SK-N-SH (cell line): ENCODE measurements at regions of chr3 and their contacts with region 1.

Region 1: GRCh38 chr3:11651900-11652299 is 8.2 kb upstream of the VGLL4 start:
- DNase-seq: peak; percentile 43
- H3K4me3 ChIP-seq: no peak overlapping the region
- H3K27ac ChIP-seq: no peak overlapping the region
- H3K4me1 ChIP-seq: peaks cover 0 to 2% of the 10 kb centered on the region in 2 experiments; a peak in 2 of 4 replicates
- H3K27me3 ChIP-seq: no peaks in the 10 kb centered on the region
- CTCF ChIP-seq: peak; percentile 64
- EP300 ChIP-seq: no peak
- RAD21 ChIP-seq: peak; percentile 72

Region 2: GRCh38 chr3:11385891-11386290 is 266.0 kb before region 1 on chr3:
- CTCF ChIA-PET with region 1: interaction called, 147 read pairs
- POLR2A ChIA-PET with region 1: no interaction called
- DNase-seq: no peak
- H3K4me3 ChIP-seq: no peak overlapping the region
- H3K27ac ChIP-seq: peak overlapping the region; percentile 74 to 83; a peak in 3 of 4 replicates
- H3K4me1 ChIP-seq: peaks cover 12 to 23% of the 10 kb centered on the region in 2 experiments
- H3K27me3 ChIP-seq: no peaks in the 10 kb centered on the region
- CTCF ChIP-seq: no peak
- EP300 ChIP-seq: 0 out of 4 replicates have a peak, but pooled peaks of 1 of the 2 experiments have one; percentile 5
- RAD21 ChIP-seq: no peak

Region 3: GRCh38 chr3:11662402-11662990 is 10.6 kb after region 1 on chr3:
- CTCF ChIA-PET with region 1: interaction called, 10 read pairs
- POLR2A ChIA-PET with region 1: no interaction called
- DNase-seq: no peak
- H3K4me3 ChIP-seq: no peak overlapping the region
- H3K27ac ChIP-seq: peak overlapping the region in 1 of 2 experiments; percentile 25; a peak in 1 of 4 replicates
- H3K4me1 ChIP-seq: peaks cover 0 to 4% of the 10 kb centered on the region in 2 experiments; a peak in 2 of 4 replicates
- H3K27me3 ChIP-seq: no peaks in the 10 kb centered on the region
- CTCF ChIP-seq: peak; percentile 59
- EP300 ChIP-seq: no peak
- RAD21 ChIP-seq: peak; percentile 20; the same call in 1 of the 2 replicates